Activated CD4-positive, alpha-beta memory T cell treated with anti-CD3 and anti-CD28 coated beads for 36 hours (primary cell): ENCODE measurements at regions of chr3 and their contacts with region 1.

Region 1: DNA sequence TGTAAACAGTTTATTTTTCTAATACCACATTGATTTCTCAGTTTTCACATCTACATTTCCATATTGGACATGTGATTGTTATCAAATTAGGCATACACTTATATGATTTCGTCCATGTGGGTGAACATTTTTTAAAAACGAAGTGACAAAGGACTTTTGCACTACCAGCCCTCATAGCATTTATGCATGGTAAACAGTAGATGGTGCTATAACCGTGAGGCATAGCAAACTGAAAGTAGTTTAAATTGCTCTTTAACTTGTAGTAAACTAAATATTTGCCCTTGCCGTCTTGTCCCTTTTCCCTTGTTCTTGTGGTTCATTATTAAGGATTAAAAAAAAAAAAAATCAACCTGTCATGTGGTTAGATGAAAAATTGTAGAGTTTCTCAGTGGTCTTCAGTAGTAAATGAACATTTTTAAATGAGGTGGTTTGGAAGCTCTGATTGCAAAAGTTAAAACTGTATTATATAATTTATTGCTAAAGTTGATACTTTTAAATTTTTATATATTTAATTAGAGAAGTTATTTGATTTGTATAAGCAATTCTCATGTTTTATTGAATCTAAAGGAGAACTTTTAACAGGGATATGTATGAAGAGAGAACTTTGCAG is 24.0 kb downstream of the STX19 start:
- DNase-seq: no peak
- H3K4me3 Mint-ChIP-seq: peak overlapping the region; percentile 9
- H3K27ac Mint-ChIP-seq: no peak overlapping the region
- H3K4me1 Mint-ChIP-seq: peaks cover 10% of the 10 kb centered on the region
- H3K27me3 Mint-ChIP-seq: no peaks in the 10 kb centered on the region

Region 2: GRCh38 chr3:93906245-93906644 is 98.2 kb before region 1 on chr3:
- CTCF ChIA-PET with region 1: no interaction called
- POLR2A ChIA-PET with region 1: no interaction called
- intact Hi-C with region 1: no loop called
- DNase-seq: no peak
- H3K4me3 Mint-ChIP-seq: no peak overlapping the region
- H3K27ac Mint-ChIP-seq: no peak overlapping the region
- H3K4me1 Mint-ChIP-seq: no peaks in the 10 kb centered on the region
- H3K27me3 Mint-ChIP-seq: no peaks in the 10 kb centered on the region

Region 3: DNA sequence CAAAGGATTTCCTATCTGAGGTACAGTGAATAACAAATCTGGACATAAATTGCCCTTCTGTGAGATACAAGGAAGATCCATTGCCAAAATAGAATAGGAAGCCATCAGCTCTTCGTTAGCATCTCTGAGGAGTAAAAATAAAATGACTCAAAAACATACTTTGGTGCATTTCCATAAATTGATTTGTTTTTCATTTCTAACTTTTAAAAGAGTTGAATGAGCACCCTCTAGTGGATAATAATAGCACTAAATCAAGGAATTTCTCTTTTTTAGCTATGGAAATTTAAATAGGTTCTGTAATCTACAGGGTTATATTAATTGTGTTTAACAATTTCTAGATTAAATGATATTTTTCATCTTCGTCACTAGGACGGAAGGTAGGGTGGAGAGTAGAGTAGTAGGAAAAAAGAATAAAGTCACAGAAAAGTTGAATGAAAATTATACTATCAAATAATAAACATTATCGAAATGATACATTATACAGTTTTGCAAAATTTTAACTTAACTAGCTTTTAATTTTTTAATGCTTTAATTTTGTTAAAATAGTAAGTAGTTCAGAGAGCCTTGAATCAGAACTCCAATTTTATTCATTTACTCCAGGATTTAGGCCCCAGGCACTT is 64.9 kb after region 1 on chr3:
- CTCF ChIA-PET with region 1: interaction called, 52 read pairs
- POLR2A ChIA-PET with region 1: no interaction called
- intact Hi-C with region 1: loop called (anchors 1 kb)
- DNase-seq: no peak
- H3K4me3 Mint-ChIP-seq: no peak overlapping the region
- H3K27ac Mint-ChIP-seq: no peak overlapping the region
- H3K4me1 Mint-ChIP-seq: peaks cover 75% of the 10 kb centered on the region
- H3K27me3 Mint-ChIP-seq: no peaks in the 10 kb centered on the region

Region 4: GRCh38 chr3:94184781-94185180 is 180.4 kb after region 1 on chr3:
- CTCF ChIA-PET with region 1: no interaction called
- POLR2A ChIA-PET with region 1: no interaction called
- intact Hi-C with region 1: no loop called
- DNase-seq: no peak
- H3K4me3 Mint-ChIP-seq: no peak overlapping the region
- H3K27ac Mint-ChIP-seq: no peak overlapping the region
- H3K4me1 Mint-ChIP-seq: no peaks in the 10 kb centered on the region
- H3K27me3 Mint-ChIP-seq: no peaks in the 10 kb centered on the region

Region 5: DNA sequence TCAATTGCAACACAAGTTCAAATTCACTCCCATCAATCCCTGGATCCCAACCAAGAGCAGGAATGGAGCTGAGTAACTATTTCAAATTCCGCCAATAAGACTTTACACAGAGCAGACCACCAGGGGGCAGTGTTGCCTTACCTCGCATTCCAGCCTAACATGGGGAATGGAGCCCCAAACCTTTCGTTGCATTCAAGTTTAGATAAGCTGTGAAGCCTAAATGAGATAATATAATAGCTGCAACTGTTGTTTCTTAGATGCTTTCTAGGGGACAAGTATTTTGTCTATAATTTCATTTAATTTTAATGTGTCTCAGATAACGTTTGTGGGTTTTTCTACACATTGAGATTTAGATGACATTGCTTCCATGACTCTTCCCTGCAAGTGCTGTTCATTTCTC is 245.2 kb after region 1 on chr3:
- CTCF ChIA-PET with region 1: interaction called, 6 read pairs
- POLR2A ChIA-PET with region 1: no interaction called
- intact Hi-C with region 1: loop called (anchors 10 kb)
- DNase-seq: peak; percentile 73
- H3K4me3 Mint-ChIP-seq: no peak overlapping the region
- H3K27ac Mint-ChIP-seq: no peak overlapping the region
- H3K4me1 Mint-ChIP-seq: no peaks in the 10 kb centered on the region
- H3K27me3 Mint-ChIP-seq: peaks cover 9% of the 10 kb centered on the region

Region 6: DNA sequence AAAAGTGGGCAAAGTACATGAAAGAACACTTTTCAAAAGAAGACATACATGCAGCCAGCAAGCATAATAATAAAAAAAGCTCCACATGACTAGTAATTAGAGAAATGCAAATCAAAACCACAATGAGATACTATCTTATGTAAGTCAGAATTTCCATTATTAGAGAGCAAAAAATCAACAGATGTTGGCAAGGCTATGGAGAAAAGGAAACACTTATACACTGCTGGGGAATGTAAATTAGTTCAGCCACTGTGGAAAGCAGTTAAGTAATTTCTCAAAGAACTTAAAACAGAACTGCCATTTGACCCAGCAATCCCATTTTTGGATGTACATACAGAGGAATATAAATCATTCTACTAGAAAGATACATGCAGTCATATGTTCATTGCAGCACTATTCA is 419.2 kb after region 1 on chr3:
- CTCF ChIA-PET with region 1: no interaction called
- POLR2A ChIA-PET with region 1: no interaction called
- intact Hi-C with region 1: no loop called
- DNase-seq: no peak
- H3K4me3 Mint-ChIP-seq: no peak overlapping the region
- H3K27ac Mint-ChIP-seq: no peak overlapping the region
- H3K4me1 Mint-ChIP-seq: no peaks in the 10 kb centered on the region
- H3K27me3 Mint-ChIP-seq: no peaks in the 10 kb centered on the region